BJ (cell line): ENCODE measurements at regions of chr17 and their contacts with region 1.

Region 1: DNA sequence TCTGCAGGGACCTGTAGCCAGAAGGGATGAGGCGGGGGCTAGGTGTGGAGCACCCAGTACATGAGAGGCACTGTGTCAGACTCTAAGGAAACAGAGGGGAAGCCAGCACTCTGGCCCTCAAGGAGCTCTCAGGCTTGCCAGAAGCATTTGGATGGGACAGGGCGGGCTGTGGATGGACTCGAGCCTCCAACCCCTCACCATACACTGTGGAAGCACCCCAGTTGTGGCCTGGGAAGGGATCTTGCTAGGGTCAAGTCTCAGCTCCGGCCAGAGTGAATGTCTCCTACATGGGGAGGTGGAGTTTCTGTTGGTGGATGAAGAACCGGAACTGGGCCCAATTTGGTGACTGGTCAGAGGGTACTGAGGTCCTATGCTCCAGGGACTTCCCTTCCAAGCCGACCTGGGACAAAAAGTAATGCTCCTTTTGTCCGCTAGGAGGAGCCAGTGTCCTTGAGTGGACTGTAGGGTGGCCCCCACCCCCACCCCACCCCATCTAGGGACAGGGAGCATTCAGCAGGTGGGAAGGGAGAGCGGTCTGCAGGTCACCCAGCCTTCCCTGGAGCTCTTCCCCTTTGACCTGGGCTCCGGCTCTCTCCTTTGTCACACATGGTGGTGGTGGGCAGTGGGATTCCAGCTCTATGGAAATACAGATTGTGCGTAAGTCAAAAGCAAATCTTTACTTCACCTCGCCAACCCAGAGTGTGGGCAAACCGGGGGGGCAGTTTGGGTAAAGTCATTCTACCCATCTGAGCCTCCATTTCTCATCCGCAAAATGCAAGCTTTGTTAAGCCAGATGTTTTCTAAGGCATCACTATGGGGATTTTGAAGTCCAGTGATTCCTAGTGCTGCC is 20.4 kb upstream of the PHB1 start:
- DNase-seq: no peak
- H3K4me3 ChIP-seq: no peak overlapping the region
- H3K27me3 ChIP-seq: peaks cover 7% of the 10 kb centered on the region
- CTCF ChIP-seq: peak; percentile 85

Region 2: GRCh38 chr17:49425004-49425286 is 10.1 kb before region 1 on chr17:
- CTCF ChIA-PET with region 1: interaction called, 16 read pairs
- POLR2A ChIA-PET with region 1: no interaction called
- DNase-seq: no peak
- H3K4me3 ChIP-seq: no peak overlapping the region
- H3K27me3 ChIP-seq: no peaks in the 10 kb centered on the region
- CTCF ChIP-seq: no peak

Region 3: DNA sequence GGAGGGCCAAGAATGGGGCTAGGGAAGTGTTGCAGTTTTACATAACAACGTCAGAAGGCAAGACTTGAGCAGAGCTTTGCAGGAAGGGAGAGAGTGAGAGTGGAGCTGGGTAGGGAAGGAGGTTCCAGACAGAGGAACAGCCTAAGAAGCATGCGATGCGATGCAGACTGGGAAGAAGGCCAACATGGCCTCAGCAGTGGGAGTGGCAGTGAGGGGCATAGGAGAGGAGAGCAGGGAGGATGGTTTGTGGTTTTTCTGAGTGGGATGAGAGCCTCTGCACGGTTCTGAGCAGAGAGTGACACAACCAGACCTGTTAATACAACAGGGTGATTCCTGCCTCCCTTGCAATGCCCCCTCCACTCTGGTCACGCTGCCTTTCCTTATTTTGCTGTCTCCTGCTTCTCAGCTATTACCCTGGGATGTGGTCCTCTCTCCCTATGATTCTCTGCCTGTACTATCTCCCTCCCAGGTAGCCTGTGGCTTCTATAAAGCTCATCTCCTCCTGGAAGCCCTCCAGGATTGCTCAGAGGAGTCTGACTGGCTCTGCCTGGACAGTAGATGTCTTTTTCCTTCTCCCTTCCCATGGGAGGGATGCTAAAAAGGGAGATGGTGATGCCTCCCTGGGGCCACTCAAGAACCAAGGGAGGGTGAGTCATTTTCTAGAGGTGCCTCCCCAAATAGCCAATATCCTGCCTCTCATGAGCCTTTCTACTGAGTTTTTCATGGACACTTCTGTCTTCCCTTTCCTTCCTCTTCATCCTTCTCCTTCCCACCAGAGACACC is 21.3 kb after region 1 on chr17:
- CTCF ChIA-PET with region 1: interaction called, 10 read pairs
- POLR2A ChIA-PET with region 1: no interaction called
- DNase-seq: peak; percentile 68
- H3K4me3 ChIP-seq: no peak overlapping the region
- H3K27me3 ChIP-seq: peaks cover 11% of the 10 kb centered on the region
- CTCF ChIP-seq: no peak

Region 4: GRCh38 chr17:49496183-49496866 is 61.3 kb after region 1 on chr17:
- CTCF ChIA-PET with region 1: interaction called, 10 read pairs
- POLR2A ChIA-PET with region 1: no interaction called
- DNase-seq: no peak
- H3K4me3 ChIP-seq: no peak overlapping the region
- H3K27me3 ChIP-seq: peaks cover 59% of the 10 kb centered on the region
- CTCF ChIP-seq: peak; percentile 41; the same call in 1 of the 2 replicates

Region 5: DNA sequence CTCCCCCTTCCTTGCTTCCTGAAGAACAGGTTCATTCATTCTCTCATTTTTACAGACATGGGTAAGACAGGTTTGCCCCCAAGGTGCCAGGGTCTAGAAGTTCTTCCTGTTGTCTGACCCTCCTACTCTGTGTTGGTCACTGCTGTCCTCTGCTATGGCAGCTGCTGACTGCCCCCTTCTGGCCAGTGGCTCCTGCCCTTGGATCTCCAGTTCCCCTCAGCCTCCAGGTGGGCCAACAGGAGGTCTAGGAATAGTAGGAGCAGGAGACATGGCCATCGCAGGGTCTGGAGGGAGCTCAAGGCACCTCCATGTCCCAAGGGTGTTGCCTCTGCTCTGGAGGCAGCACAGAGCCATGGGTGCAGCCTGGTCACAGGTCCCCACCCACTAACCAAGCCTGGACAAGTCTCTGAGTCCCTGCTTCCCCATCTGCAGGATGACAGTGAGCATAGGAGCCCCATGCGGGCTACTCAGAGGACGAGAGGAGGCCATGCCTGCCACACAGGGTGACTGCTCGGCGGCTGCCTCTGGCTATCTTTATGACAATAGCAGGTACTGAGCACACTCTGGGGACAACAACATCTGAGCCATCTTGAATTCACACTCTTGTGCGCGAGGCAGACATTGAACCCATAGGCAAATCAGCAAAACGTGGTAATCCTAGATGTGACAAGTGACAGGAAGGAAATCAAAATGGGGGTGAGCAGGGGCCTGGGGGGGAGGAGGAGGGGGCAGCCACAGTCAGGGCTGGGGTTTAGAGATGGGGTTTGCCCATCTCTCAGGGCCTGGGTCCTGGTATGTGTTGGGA is 113.7 kb after region 1 on chr17:
- CTCF ChIA-PET with region 1: interaction called, 294 read pairs
- POLR2A ChIA-PET with region 1: no interaction called
- DNase-seq: no peak
- H3K4me3 ChIP-seq: no peak overlapping the region
- H3K27me3 ChIP-seq: peaks cover 9% of the 10 kb centered on the region
- CTCF ChIP-seq: peak; percentile 80